ENCODE measurements at regions of chr1 and their contacts with region 1.

Region 1: DNA sequence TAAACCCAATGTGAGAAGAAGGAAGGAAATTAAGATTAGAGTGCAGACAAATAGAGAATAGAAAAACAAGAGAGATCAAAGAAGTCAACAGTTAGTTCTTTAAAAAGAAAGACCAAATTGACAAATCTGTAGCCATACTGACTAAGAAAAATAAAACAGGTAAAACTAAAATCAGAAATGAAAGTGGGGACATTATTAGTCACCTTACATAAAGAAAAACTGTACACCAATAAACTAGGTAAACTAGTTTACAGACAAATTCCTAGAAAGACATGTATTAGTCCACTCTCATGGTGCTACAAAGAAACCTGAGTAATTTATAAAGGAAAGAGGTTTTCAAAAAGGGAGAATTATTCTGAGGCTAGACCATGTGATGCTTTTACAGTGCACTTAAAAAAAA is 22.3 kb downstream of the BLZF1 start:
- DNase-seq: no peak
- H3K4me3 Mint-ChIP-seq: no peak overlapping the region
- H3K27ac Mint-ChIP-seq: peak overlapping the region; percentile 1
- H3K4me1 Mint-ChIP-seq: peaks cover 7% of the 10 kb centered on the region
- H3K27me3 Mint-ChIP-seq: no peaks in the 10 kb centered on the region

Region 2: DNA sequence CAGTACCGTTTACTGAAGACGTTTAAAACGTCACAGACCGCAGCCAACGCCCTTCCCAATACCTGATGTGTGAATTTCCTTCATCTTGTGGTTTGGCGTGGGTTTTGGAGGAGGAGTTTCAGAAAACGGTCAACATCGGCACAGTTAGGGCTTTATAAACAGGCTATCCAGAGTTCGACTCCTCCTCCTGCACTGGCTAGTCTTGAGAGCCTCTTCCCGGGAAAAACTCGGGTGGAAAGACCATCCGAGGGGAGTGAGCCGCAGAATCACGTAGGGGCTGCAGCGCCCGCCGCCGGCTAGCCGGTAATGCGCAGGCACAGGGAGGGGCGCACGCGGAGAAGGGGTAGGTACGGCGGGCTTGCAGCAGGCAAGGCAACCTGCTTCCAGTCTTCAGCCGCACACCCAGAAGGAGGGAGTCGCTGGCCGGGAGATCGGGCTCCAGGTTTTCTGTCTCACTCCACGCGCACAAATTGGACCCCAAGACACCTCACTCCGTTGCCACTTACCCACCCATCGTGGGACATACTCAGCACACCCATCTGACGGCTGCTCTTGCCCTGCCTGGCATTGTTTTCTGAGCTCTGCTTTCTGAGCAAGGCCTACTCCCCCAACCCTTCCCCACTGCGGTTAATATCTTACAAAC is 70.0 kb after region 1 on chr1:
- CTCF ChIA-PET with region 1: no interaction called
- POLR2A ChIA-PET with region 1: no interaction called
- intact Hi-C with region 1: loop called (anchors 1 kb)
- DNase-seq: peak; percentile 43
- H3K4me3 Mint-ChIP-seq: peak overlapping the region; percentile 43
- H3K27ac Mint-ChIP-seq: no peak overlapping the region
- H3K4me1 Mint-ChIP-seq: peaks cover 18% of the 10 kb centered on the region
- H3K27me3 Mint-ChIP-seq: peaks cover 16% of the 10 kb centered on the region